Caco-2 (cell line): ENCODE measurements at regions of chr3 and their contacts with region 1.

Region 1: GRCh38 chr3:128322066-128323022 is 144.3 kb downstream of the DNAJB8 start:
- DNase-seq: peak in 1 of 2 experiments; percentile 34
- H3K4me3 ChIP-seq: no peak overlapping the region
- H3K4me3 Mint-ChIP-seq: no peak overlapping the region
- H3K27ac Mint-ChIP-seq: no peak overlapping the region
- H3K4me1 ChIP-seq: peaks cover 23% of the 10 kb centered on the region
- H3K4me1 Mint-ChIP-seq: peaks cover 11% of the 10 kb centered on the region
- H3K27me3 ChIP-seq: no peaks in the 10 kb centered on the region
- H3K27me3 Mint-ChIP-seq: no peaks in the 10 kb centered on the region
- CTCF ChIP-seq: peak in 1 of 2 experiments; percentile 23

Region 2: DNA sequence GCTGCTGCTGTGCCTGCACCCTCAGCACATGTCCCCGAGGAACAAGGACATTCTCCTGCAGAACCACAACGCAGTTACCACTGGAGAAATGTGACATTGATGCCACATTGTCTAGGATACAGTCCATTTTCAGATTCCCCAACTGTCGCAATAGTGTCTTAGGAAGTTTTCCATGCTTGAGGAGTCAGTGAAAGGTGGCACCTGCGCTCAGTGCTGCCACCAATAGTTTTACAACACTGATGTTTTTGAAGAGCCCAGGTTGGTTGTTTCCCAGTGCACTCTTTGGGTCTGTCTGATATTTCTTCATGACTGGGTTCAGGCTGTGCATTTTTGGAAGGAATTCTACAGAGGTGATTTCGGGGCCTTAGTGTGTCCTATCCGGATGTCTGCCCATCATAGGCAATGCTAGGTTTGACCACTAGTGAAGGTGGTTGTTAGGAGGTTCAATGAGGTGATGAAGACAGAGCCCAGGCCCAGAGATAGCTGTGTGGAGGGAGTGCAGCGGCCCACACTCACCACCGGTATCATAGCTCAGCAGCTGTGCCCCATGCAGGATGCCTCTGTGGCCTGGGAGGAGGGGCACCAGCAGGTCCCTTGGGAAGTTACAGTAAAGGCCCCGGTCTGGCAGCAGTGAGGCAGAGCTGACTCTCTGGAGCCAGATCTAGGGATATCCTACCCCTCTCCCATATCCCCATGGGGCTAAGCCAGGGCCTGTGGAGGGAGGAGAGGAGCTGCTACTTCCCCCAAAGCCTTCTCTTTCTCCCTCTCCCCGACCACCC is 47.7 kb after region 1 on chr3:
- CTCF ChIA-PET with region 1: no interaction called
- POLR2A ChIA-PET with region 1: no interaction called
- intact Hi-C with region 1: loop called (anchors 5 kb)
- DNase-seq: no peak
- H3K4me3 ChIP-seq: no peak overlapping the region
- H3K4me3 Mint-ChIP-seq: no peak overlapping the region
- H3K27ac Mint-ChIP-seq: no peak overlapping the region
- H3K4me1 ChIP-seq: no peaks in the 10 kb centered on the region
- H3K4me1 Mint-ChIP-seq: no peaks in the 10 kb centered on the region
- H3K27me3 ChIP-seq: no peaks in the 10 kb centered on the region
- H3K27me3 Mint-ChIP-seq: no peaks in the 10 kb centered on the region
- CTCF ChIP-seq: peak in 1 of 2 experiments; percentile 20

Region 3: GRCh38 chr3:128680602-128681368 is 358.4 kb after region 1 on chr3:
- CTCF ChIA-PET with region 1: no interaction called
- POLR2A ChIA-PET with region 1: no interaction called
- intact Hi-C with region 1: no loop called
- DNase-seq: peak; percentile 99
- H3K4me3 ChIP-seq: peak overlapping the region; percentile 88
- H3K4me3 Mint-ChIP-seq: peak overlapping the region; percentile 86
- H3K27ac Mint-ChIP-seq: peak overlapping the region; percentile 92
- H3K4me1 ChIP-seq: no peaks in the 10 kb centered on the region
- H3K4me1 Mint-ChIP-seq: peaks cover 5% of the 10 kb centered on the region
- H3K27me3 ChIP-seq: no peaks in the 10 kb centered on the region
- H3K27me3 Mint-ChIP-seq: no peaks in the 10 kb centered on the region
- CTCF ChIP-seq: peak; percentile 83 to 96